Cardiac septum (tissue), 1 donor: ENCODE measurements at regions of chr1 and their contacts with region 1.

Region 1: GRCh38 chr1:183646776-183647175 is 6.3 kb downstream of the APOBEC4 start:
- DNase-seq: no peak

Region 2: GRCh38 chr1:183432548-183432875 is 214.3 kb before region 1 on chr1:
- intact Hi-C with region 1: no loop called
- DNase-seq: no peak

Region 3: GRCh38 chr1:183619781-183620180 is 27.0 kb before region 1 on chr1:
- intact Hi-C with region 1: no loop called
- DNase-seq: no peak

Region 4: GRCh38 chr1:183739741-183740271 is 93.0 kb after region 1 on chr1:
- intact Hi-C with region 1: loop called (anchors 5 kb)
- DNase-seq: no peak

Region 5: GRCh38 chr1:183896466-183897048 is 249.8 kb after region 1 on chr1:
- intact Hi-C with region 1: loop called (anchors 5 kb)
- DNase-seq: no peak